Naive thymus-derived CD4-positive, alpha-beta T cell (primary cell): ENCODE measurements at regions of chr14 and their contacts with region 1.

Region 1: GRCh38 chr14:55807059-55807499 is 227.1 kb downstream of the KTN1 start:
- DNase-seq: peak; percentile 46 to 91 (median 82)
- ATAC-seq: peak; percentile 91
- H3K4me3 ChIP-seq: peak overlapping the region; percentile 23
- H3K4me3 Mint-ChIP-seq: peak overlapping the region; percentile 31 to 70 (median 54)
- H3K27ac ChIP-seq: peak overlapping the region; percentile 61
- H3K27ac Mint-ChIP-seq: peak overlapping the region; percentile 90 to 98 (median 91)
- H3K4me1 ChIP-seq: peaks cover 16 to 17% of the 10 kb centered on the region in 2 donors
- H3K4me1 Mint-ChIP-seq: peaks cover 25 to 64% (median 36%) of the 10 kb centered on the region in 7 donors
- H3K27me3 ChIP-seq: no peaks in the 10 kb centered on the region
- H3K27me3 Mint-ChIP-seq: no peaks in the 10 kb centered on the region

Region 2: GRCh38 chr14:55327179-55327578 is 479.9 kb before region 1 on chr14:
- CTCF ChIA-PET with region 1: no interaction called
- POLR2A ChIA-PET with region 1: no interaction called
- intact Hi-C with region 1: no loop called
- DNase-seq: no peak
- ATAC-seq: peak; percentile 49
- H3K4me3 ChIP-seq: no peak overlapping the region
- H3K4me3 Mint-ChIP-seq: peak overlapping the region in 2 of 10 donors; percentile 1 to 9
- H3K27ac ChIP-seq: no peak overlapping the region
- H3K27ac Mint-ChIP-seq: peak overlapping the region in 8 of 9 donors; percentile 0 to 66 (median 32)
- H3K4me1 ChIP-seq: peaks cover 0 to 5% of the 10 kb centered on the region in 2 donors
- H3K4me1 Mint-ChIP-seq: peaks cover 22 to 68% (median 53%) of the 10 kb centered on the region in 7 donors
- H3K27me3 ChIP-seq: no peaks in the 10 kb centered on the region
- H3K27me3 Mint-ChIP-seq: no peaks in the 10 kb centered on the region

Region 3: GRCh38 chr14:55762595-55763232 is 44.4 kb before region 1 on chr14:
- CTCF ChIA-PET with region 1: no interaction called
- POLR2A ChIA-PET with region 1: no interaction called
- intact Hi-C with region 1: loop called in 1 of 2 experiments (anchors 1 kb)
- DNase-seq: peak in 3 of 9 donors; percentile 11 to 57 (median 22)
- ATAC-seq: peak; percentile 81
- H3K4me3 ChIP-seq: no peak overlapping the region
- H3K4me3 Mint-ChIP-seq: peak overlapping the region in 3 of 10 donors; percentile 6 to 85 (median 50)
- H3K27ac ChIP-seq: no peak overlapping the region
- H3K27ac Mint-ChIP-seq: peak overlapping the region in 6 of 9 donors; percentile 13 to 91 (median 62)
- H3K4me1 ChIP-seq: no peaks in the 10 kb centered on the region
- H3K4me1 Mint-ChIP-seq: peaks cover 0 to 26% (median 2%) of the 10 kb centered on the region in 7 donors
- H3K27me3 ChIP-seq: no peaks in the 10 kb centered on the region
- H3K27me3 Mint-ChIP-seq: peaks cover under 1 to 7% (median 3%) of the 10 kb centered on the region in 5 donors

Region 4: DNA sequence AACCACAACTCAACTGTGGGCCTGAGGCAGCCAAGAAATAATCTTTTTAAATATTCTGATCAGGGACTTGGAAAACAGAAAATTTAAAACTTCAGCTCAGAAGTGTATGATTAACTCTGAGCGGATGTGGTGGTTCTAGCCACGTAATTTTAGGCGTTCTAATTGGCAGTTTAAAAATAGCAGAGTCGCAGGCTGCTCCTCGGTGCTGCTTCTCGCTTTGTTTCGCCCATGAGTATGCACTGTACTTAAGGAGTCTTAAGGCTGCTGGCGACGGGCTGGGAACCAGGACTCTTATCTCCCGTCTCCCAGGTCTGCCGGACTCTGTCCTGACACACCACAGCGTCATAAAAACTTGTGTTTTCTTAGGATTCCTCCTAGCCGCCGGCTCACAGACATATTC is 197.7 kb after region 1 on chr14:
- CTCF ChIA-PET with region 1: no interaction called
- POLR2A ChIA-PET with region 1: no interaction called
- intact Hi-C with region 1: loop called in 1 of 2 experiments (anchors 5 kb)
- DNase-seq: peak in 7 of 9 donors; percentile 24 to 64 (median 41)
- ATAC-seq: peak; percentile 43
- H3K4me3 ChIP-seq: no peak overlapping the region
- H3K4me3 Mint-ChIP-seq: peak overlapping the region; percentile 19 to 77 (median 58)
- H3K27ac ChIP-seq: no peak overlapping the region
- H3K27ac Mint-ChIP-seq: peak overlapping the region in 2 of 9 donors; percentile 58 to 63
- H3K4me1 ChIP-seq: peaks cover 26% of the 10 kb centered on the region in 2 donors
- H3K4me1 Mint-ChIP-seq: peaks cover 26 to 45% (median 32%) of the 10 kb centered on the region in 7 donors
- H3K27me3 ChIP-seq: peaks cover 0 to 18% of the 10 kb centered on the region in 2 donors
- H3K27me3 Mint-ChIP-seq: peaks cover 46 to 82% (median 54%) of the 10 kb centered on the region in 5 donors